Mucosa of descending colon (tissue), 3 donors: ENCODE measurements at regions of chr18 and their contacts with region 1.

Region 1: DNA sequence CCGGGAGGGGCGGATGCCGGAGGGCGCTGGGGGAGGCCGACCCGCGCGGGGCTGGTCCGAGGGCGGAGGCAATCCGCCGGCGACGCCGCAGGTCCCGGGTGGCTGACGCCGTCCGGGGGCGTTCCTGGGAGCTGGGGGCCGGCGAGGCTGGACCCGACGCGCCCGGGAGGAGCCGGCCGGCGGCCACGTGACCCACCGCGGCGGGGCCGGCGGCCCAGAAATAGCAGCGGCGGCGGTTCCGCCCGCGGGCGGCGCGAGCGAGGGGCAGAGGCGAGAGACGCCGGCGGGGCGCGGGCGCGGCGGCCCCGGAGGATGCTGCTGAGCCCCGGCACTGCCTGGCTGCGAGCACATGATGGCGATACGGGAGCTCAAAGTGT is at the start of gene RAB31:
- DNase-seq: peak; percentile 60 to 79 (median 72)
- ATAC-seq: peak; percentile 75
- H3K4me3 ChIP-seq: peak within 1 kb of the TSS; percentile 40
- H3K4me1 ChIP-seq: peaks cover 13% of the 10 kb centered on the region
- CTCF ChIP-seq: no peak
- total RNA-seq, gene RAB31: 12.8 to 58.5 (median 27.4) TPM

Region 2: GRCh38 chr18:9913526-9914333 is 205.7 kb after region 1 on chr18 and contains the start of gene VAPA:
- intact Hi-C with region 1: loop called in 1 of 2 experiments (anchors 5 kb)
- DNase-seq: peak; percentile 95 to 97 (median 96)
- ATAC-seq: peak; percentile 93
- H3K4me3 ChIP-seq: peak within 1 kb of the TSS; percentile 95
- H3K4me1 ChIP-seq: peaks cover 33% of the 10 kb centered on the region
- CTCF ChIP-seq: no peak
- total RNA-seq, gene VAPA: 240 to 333 (median 273) TPM